SK-N-SH (cell line): ENCODE measurements at regions of chr7 and their contacts with region 1.

Region 1: DNA sequence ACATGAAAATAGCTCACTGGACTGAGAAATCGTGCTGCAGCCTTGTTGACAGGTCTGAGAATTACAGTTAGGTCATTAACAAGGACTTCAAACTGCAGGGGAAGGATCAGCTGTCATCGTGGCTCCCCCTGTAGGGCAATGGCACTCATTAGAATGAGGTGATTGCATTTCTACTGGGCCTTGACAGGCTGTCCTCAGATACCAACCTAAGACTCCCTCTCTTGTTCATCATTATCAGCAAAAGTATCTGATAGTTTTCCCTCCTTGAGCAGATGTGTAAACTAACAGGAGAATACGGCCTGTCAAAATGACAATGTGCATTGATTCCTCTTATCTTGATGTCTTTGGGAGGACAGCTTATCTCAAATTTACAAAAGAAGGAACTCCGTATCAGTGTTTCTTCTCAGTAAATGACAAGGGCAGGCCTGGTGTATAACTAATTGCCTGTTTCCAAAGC is 648.5 kb upstream of the LRRN3 start:
- DNase-seq: peak; percentile 81
- H3K4me3 ChIP-seq: no peak overlapping the region; a peak in 1 of 4 replicates
- H3K27ac ChIP-seq: peak overlapping the region in 1 of 2 experiments; percentile 86; a peak in 2 of 4 replicates
- H3K4me1 ChIP-seq: peaks cover 0 to 5% of the 10 kb centered on the region in 2 experiments; a peak in 2 of 4 replicates
- H3K27me3 ChIP-seq: no peaks in the 10 kb centered on the region
- CTCF ChIP-seq: peak; percentile 44
- EP300 ChIP-seq: peak; percentile 43 to 100; a peak in 2 of 4 replicates
- RAD21 ChIP-seq: peak; percentile 90

Region 2: DNA sequence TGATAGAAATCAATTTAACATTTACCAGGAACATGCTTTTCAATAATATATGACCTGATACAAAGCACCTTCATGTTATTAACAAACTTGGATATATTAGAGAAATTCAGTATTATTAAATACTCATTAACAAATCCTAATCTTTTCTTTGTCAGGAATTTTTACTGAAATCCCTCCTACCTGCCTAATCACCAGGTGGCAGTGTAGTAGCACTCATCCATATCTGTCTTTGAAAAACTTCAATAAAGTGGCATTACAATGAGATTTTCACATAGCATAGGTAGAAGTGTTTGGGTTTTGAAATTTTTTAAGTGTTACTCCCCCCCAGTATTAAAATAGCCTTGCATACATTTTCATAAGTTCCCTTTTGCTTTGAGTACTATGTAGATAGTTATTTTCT is 598.0 kb before region 1 on chr7:
- CTCF ChIA-PET with region 1: interaction called, 15 read pairs
- POLR2A ChIA-PET with region 1: no interaction called
- DNase-seq: peak; percentile 32
- H3K4me3 ChIP-seq: no peak overlapping the region
- H3K27ac ChIP-seq: peak overlapping the region in 1 of 2 experiments; percentile 43; a peak in 2 of 4 replicates
- H3K4me1 ChIP-seq: no peaks in the 10 kb centered on the region; a peak in 1 of 4 replicates
- H3K27me3 ChIP-seq: no peaks in the 10 kb centered on the region
- CTCF ChIP-seq: peak; percentile 51
- EP300 ChIP-seq: no peak
- RAD21 ChIP-seq: peak; percentile 94

Region 3: DNA sequence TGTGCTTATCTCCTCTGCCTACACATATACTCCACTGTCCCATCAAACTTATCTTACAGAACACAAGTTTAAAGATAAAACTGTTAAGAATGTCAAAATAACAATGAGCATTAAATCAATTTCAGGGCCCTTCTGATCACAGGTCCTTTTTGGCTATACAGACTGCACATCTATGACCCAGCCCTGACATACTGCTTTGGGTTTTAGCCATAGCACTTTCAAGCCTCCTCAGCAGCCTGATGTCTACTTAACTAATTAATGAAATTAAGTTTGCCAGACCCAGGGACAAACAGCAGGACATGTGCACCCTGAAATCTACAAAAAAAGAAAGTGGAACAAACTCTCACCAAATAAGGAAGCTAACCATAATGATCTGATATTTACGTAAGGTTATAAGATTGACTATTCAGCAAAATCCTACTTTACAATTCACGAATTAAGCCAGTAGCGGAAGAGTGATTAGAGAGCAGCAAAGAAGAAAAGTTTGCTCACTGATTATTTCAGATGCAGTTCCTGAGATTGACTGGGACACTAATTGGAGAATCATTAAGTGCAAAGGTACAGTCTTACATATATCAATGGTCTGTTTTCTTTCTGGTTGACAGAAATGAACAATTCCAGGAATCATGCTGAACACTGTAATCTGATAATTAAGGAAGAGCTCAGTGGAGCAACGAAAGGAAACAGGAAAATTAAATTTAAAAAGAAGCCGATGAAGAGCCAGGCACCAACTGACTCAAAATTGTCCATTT is 20.7 kb before region 1 on chr7:
- CTCF ChIA-PET with region 1: interaction called, 31 read pairs
- POLR2A ChIA-PET with region 1: interaction called, 4 read pairs
- DNase-seq: peak; percentile 36
- H3K4me3 ChIP-seq: no peak overlapping the region; a peak in 1 of 4 replicates
- H3K27ac ChIP-seq: peak overlapping the region in 1 of 2 experiments; percentile 100; a peak in 2 of 4 replicates
- H3K4me1 ChIP-seq: peaks cover 0 to 28% of the 10 kb centered on the region in 2 experiments; a peak in 2 of 4 replicates
- H3K27me3 ChIP-seq: no peaks in the 10 kb centered on the region
- CTCF ChIP-seq: no peak
- EP300 ChIP-seq: peak; percentile 78 to 100
- RAD21 ChIP-seq: peak; percentile 50

Region 4: DNA sequence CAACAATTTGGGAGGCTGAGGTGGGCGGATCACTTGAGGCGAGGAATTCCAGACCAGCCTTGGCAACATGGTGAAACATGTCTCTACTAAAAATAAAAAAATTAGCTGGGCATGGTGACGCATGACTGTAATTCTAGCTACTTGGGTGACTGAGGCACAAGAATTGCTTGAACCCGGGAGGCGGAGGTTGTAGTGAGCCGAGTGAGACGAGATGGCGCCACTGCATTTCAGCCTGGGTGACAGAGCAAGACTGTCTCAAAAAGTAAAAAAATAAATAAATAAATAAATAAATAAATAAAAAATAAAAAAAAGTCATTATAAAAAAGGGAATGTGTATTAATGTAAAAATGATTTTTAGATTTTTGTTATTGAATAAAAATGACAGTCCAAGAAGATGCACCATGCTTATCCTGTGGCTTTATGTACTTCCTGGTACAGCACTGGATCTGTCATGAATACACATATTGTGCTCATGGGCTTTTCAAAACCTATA is 10.3 kb before region 1 on chr7:
- CTCF ChIA-PET with region 1: interaction called, 15 read pairs
- POLR2A ChIA-PET with region 1: no interaction called
- DNase-seq: no peak
- H3K4me3 ChIP-seq: no peak overlapping the region
- H3K27ac ChIP-seq: no peak overlapping the region
- H3K4me1 ChIP-seq: no peaks in the 10 kb centered on the region; a peak in 1 of 4 replicates
- H3K27me3 ChIP-seq: no peaks in the 10 kb centered on the region
- CTCF ChIP-seq: no peak
- EP300 ChIP-seq: no peak
- RAD21 ChIP-seq: no peak